Caco-2 (cell line): ENCODE measurements at regions of chr1 and their contacts with region 1.

Region 1: GRCh38 chr1:115980998-115981993 is 5.0 kb downstream of the SLC22A15 start:
- DNase-seq: peak; percentile 38 to 46
- H3K4me3 ChIP-seq: no peak overlapping the region
- H3K4me3 Mint-ChIP-seq: no peak overlapping the region
- H3K27ac Mint-ChIP-seq: no peak overlapping the region
- H3K4me1 ChIP-seq: no peaks in the 10 kb centered on the region
- H3K4me1 Mint-ChIP-seq: no peaks in the 10 kb centered on the region
- H3K27me3 ChIP-seq: no peaks in the 10 kb centered on the region
- H3K27me3 Mint-ChIP-seq: no peaks in the 10 kb centered on the region
- CTCF ChIP-seq: peak; percentile 40 to 45

Region 2: DNA sequence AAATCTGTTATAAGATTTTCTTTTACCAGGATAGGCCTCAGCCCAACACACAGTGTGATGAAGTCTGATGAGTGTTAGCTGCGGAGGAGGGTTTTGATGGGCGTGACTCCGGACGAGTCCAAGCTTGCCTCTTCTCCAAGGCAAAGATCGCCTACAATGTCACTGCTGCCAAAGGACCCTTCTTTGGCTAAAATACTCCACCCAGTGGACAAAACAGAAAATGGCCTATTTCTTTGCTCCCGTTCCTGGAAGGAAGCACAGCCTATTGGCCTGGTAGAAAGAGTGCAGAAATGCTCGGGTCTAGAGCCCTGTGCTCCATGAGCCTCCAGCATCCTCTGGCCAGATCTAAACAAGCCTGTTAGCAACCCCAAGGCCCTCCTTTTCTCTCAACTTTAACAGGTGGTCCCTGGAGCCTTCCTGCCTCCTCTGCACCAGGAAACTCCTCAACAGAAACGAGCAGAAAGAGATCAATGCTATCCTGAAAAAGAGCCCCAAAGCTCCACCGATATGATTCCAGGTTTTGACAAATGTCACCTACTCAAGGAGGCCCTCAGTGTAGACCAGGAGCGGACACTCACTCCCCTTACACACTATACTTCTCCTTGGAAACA is 209.3 kb before region 1 on chr1:
- CTCF ChIA-PET with region 1: interaction called, 3 read pairs
- POLR2A ChIA-PET with region 1: no interaction called
- intact Hi-C with region 1: loop called (anchors 1 kb)
- DNase-seq: peak; percentile 75 to 77
- H3K4me3 ChIP-seq: no peak overlapping the region
- H3K4me3 Mint-ChIP-seq: no peak overlapping the region
- H3K27ac Mint-ChIP-seq: no peak overlapping the region
- H3K4me1 ChIP-seq: peaks cover 6% of the 10 kb centered on the region; the same call in 1 of the 2 replicates
- H3K4me1 Mint-ChIP-seq: peaks cover 11% of the 10 kb centered on the region
- H3K27me3 ChIP-seq: no peaks in the 10 kb centered on the region
- H3K27me3 Mint-ChIP-seq: no peaks in the 10 kb centered on the region
- CTCF ChIP-seq: peak; percentile 30 to 41

Region 3: DNA sequence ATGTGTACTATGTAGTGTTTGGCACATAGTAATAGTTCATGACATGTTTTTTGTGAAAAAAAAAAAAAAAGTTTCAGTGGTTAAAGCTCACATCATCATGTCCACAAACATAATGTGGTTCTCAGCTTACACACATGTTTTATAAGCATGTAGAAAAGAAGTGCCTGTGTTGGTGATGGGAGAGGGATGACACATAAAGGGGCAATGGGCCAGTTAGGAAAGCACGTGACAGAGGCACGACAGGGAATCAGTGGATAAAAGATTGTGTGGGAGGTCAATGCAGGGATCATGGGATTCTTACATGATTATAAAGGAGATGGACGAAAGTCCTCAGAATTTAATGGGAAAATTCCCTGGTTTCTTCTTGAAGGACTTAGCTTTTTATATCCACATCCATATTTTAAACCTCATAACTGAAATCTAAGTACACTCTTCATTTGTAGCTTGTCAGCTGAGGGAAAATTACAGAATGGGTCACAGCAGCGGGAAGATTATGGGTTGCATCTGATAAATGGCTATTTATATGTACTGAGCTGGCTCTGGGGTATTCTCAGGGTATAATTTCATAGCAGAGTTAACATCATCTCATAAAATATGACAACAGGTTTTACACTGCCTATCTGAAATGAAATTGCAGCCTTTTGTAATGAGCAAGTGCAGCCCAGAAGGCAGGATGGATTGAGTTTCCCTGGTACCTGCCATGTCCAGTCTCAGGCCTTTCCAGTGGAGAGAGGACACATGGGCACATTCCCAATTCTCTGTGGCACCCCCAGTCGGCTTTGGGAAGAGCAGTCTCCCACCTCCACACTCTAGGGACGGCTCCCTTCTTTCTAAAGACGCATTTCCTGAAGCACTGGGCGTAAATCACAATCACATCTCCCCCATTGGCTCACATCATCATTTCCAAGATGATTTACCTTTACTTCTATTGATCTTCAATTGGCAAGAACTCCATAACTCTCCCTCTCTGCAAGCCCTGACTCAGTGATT is 98.1 kb before region 1 on chr1:
- CTCF ChIA-PET with region 1: no interaction called
- POLR2A ChIA-PET with region 1: no interaction called
- intact Hi-C with region 1: no loop called
- DNase-seq: no peak
- H3K4me3 ChIP-seq: no peak overlapping the region
- H3K4me3 Mint-ChIP-seq: no peak overlapping the region
- H3K27ac Mint-ChIP-seq: no peak overlapping the region
- H3K4me1 ChIP-seq: no peaks in the 10 kb centered on the region
- H3K4me1 Mint-ChIP-seq: no peaks in the 10 kb centered on the region
- H3K27me3 ChIP-seq: no peaks in the 10 kb centered on the region
- H3K27me3 Mint-ChIP-seq: no peaks in the 10 kb centered on the region
- CTCF ChIP-seq: no peak